ENCODE measurements at regions of chr3 and their contacts with region 1.

Region 1: DNA sequence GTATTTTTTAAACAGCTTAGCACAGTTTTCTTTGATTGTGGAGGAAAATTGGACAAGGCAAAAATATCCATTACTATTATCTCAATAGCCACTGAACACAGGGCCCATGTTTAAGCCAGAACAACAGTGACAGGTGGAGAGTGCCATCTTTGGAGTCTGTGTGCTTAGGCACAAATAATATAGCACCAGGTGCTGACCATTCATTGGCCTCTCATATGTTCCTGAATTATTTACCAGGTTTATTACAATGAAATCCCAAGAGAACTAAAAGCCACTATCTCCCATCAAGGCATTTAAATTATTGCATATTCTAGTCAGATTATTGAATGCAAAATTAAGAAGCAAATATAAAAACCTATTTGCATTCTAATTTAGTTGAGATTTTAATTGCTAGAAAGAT is 39.6 kb downstream of the GPR156 start:
- DNase-seq: no peak
- H3K4me3 ChIP-seq: no peak overlapping the region
- H3K27ac ChIP-seq: no peak overlapping the region
- H3K4me1 ChIP-seq: no peaks in the 10 kb centered on the region
- H3K27me3 ChIP-seq: no peaks in the 10 kb centered on the region
- CTCF ChIP-seq: no peak

Region 2: GRCh38 chr3:120417272-120417911 is 172.0 kb after region 1 on chr3:
- intact Hi-C with region 1: loop called (anchors 2 kb)
- DNase-seq: peak; percentile 97
- H3K4me3 ChIP-seq: peak overlapping the region; percentile 6
- H3K27ac ChIP-seq: peak overlapping the region; percentile 68
- H3K4me1 ChIP-seq: peaks cover 3% of the 10 kb centered on the region
- H3K27me3 ChIP-seq: no peaks in the 10 kb centered on the region
- CTCF ChIP-seq: peak; percentile 87

Region 3: GRCh38 chr3:120506828-120507774 is 261.7 kb after region 1 on chr3:
- intact Hi-C with region 1: loop called (anchors 2 kb)
- DNase-seq: peak; percentile 64
- H3K4me3 ChIP-seq: no peak overlapping the region
- H3K27ac ChIP-seq: peak overlapping the region; percentile 41
- H3K4me1 ChIP-seq: no peaks in the 10 kb centered on the region
- H3K27me3 ChIP-seq: no peaks in the 10 kb centered on the region
- CTCF ChIP-seq: peak; percentile 56

Region 4: GRCh38 chr3:120795017-120795648 is 549.7 kb after region 1 on chr3:
- intact Hi-C with region 1: loop called (anchors 10 kb)
- DNase-seq: peak; percentile 80
- H3K4me3 ChIP-seq: no peak overlapping the region
- H3K27ac ChIP-seq: no peak overlapping the region
- H3K4me1 ChIP-seq: peaks cover 3% of the 10 kb centered on the region
- H3K27me3 ChIP-seq: no peaks in the 10 kb centered on the region
- CTCF ChIP-seq: peak; percentile 57